ENCODE measurements at regions of chr14 and their contacts with region 1.

Region 1: DNA sequence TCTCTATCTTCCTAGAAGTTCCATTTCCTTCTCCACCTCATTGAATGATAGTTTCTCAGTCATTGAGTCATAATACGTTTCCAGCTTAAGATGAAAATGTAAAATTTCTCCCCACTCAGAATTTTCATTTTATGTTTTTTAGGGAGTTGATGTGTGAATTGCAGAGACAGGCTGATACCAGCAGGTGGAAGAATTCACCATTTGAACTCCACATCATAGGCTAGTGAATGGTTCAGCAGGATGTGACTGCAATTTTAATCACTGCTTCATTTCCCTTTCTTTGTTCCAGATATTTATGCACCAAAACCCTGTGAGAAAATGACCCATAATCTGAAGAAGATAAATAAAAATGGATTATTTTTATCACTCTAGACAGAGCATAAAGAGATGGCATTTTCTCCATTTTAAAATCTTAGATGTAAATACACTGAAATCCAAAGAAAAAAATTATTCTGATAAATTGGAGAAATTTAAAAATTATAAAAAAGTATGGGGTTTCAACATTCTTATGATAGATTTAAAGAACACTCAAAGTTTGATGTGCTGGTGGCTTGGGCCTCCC is 10.6 kb upstream of the PYGL start:
- DNase-seq: peak; percentile 85
- H3K4me3 ChIP-seq: 0 out of 2 replicates have a peak overlapping the region, but pooled peaks have one; percentile 2
- H3K27ac ChIP-seq: peak overlapping the region; percentile 97
- H3K4me1 ChIP-seq: peaks cover 8% of the 10 kb centered on the region
- H3K27me3 ChIP-seq: no peaks in the 10 kb centered on the region

Region 2: GRCh38 chr14:51202914-51203665 is 248.2 kb after region 1 on chr14:
- in situ Hi-C with region 1: loop called (anchors 10 kb)
- DNase-seq: no peak
- H3K4me3 ChIP-seq: no peak overlapping the region
- H3K27ac ChIP-seq: no peak overlapping the region
- H3K4me1 ChIP-seq: no peaks in the 10 kb centered on the region
- H3K27me3 ChIP-seq: peaks cover 70% of the 10 kb centered on the region

Measured in GM23248 (cell line).